ENCODE measurements at regions of chr1 and their contacts with region 1.

Region 1: DNA sequence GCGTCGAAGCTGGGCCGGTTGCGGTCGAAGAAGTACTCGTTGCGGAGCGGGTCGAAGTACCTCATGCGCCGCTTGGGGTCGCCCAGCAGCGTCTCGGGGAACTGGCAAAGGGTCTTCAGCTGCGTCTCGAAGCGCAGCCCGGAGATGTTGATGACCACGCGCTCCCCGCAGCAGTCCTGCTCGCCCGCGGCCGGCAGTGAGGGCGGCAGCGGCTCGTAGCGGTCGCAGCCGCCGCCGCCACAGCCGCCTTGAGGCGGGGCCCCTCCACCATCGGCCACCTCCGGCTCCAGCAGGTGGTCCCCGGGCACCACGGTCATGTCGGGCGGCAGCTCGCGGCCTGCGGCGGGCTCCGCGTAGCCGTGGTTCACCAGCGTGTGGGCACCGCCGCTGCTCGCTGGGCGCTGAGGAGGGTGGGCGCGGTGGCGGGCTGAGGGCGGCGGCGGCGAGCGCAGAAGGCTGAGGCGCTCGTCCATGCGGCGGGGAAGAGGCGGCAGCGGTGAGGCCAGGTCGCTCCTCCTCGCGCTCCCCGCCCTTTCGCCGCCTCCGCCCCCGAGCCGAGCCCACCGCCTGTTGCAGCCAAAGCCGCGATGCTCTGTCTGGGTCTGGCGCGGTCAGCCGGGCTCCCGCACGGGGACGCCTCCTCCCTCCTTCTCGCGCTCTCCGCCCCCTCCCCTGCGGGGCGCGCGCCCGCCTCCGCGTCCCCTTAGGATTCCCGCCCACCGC is at the start of gene KCNA3:
- DNase-seq: peak; percentile 45 to 86 (median 65)
- ATAC-seq: peak; percentile 25
- H3K4me3 ChIP-seq: peak within 1 kb of the TSS; percentile 99
- H3K4me3 Mint-ChIP-seq: peak within 1 kb of the TSS; percentile 90
- H3K27ac ChIP-seq: peak within 1 kb of the TSS; percentile 93 to 95
- H3K27ac Mint-ChIP-seq: peak within 1 kb of the TSS; percentile 73
- H3K4me1 ChIP-seq: peaks cover 16% of the 10 kb centered on the region
- H3K4me1 Mint-ChIP-seq: peaks cover 59% of the 10 kb centered on the region
- H3K27me3 ChIP-seq: no peaks in the 10 kb centered on the region
- H3K27me3 Mint-ChIP-seq: no peaks in the 10 kb centered on the region
- CTCF ChIP-seq: peak; percentile 49
- total RNA-seq, gene KCNA3: 112 to 118 TPM

Region 2: GRCh38 chr1:110645821-110646735 is 28.4 kb before region 1 on chr1:
- CTCF ChIA-PET with region 1: interaction called, 13 read pairs
- POLR2A ChIA-PET with region 1: interaction called, 63 read pairs
- intact Hi-C with region 1: loop called in 1 of 2 experiments (anchors 1 kb)
- DNase-seq: peak in 3 of 14 experiments; percentile 45 to 71 (median 62)
- ATAC-seq: no peak
- H3K4me3 ChIP-seq: no peak overlapping the region
- H3K4me3 Mint-ChIP-seq: peak overlapping the region; percentile 43
- H3K27ac ChIP-seq: no peak overlapping the region
- H3K27ac Mint-ChIP-seq: no peak overlapping the region
- H3K4me1 ChIP-seq: peaks cover 77% of the 10 kb centered on the region
- H3K4me1 Mint-ChIP-seq: peaks cover 46% of the 10 kb centered on the region
- H3K27me3 ChIP-seq: no peaks in the 10 kb centered on the region
- H3K27me3 Mint-ChIP-seq: no peaks in the 10 kb centered on the region
- CTCF ChIP-seq: no peak

Region 3: DNA sequence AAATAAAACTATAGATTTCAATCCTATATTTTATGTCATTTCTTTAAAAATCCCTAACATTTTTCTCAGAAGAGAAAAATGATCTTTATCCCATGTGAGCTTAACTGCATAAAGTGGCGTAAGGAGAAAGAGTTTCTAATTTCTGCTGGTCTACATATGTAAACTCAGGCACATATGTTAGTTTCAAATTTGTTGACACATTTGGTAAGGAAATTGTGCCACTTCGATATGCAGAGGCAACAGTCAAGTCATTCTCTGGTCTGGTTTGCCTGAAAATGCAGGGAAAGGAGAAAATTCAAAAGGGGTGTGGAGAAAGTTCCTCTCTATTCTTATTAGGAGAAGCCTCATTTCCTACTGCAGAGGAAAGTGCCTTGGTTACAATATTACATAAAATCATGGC is 11.3 kb before region 1 on chr1:
- CTCF ChIA-PET with region 1: interaction called, 4 read pairs
- POLR2A ChIA-PET with region 1: interaction called, 10 read pairs
- intact Hi-C with region 1: loop called in 1 of 2 experiments (anchors 2 kb)
- DNase-seq: no peak
- ATAC-seq: no peak
- H3K4me3 ChIP-seq: no peak overlapping the region
- H3K4me3 Mint-ChIP-seq: no peak overlapping the region
- H3K27ac ChIP-seq: no peak overlapping the region
- H3K27ac Mint-ChIP-seq: peak overlapping the region; percentile 60
- H3K4me1 ChIP-seq: peaks cover 24% of the 10 kb centered on the region
- H3K4me1 Mint-ChIP-seq: peaks cover 45% of the 10 kb centered on the region
- H3K27me3 ChIP-seq: no peaks in the 10 kb centered on the region
- H3K27me3 Mint-ChIP-seq: no peaks in the 10 kb centered on the region
- CTCF ChIP-seq: no peak

Region 4: GRCh38 chr1:110766025-110766647 is 91.6 kb after region 1 on chr1:
- CTCF ChIA-PET with region 1: interaction called, 15 read pairs
- POLR2A ChIA-PET with region 1: interaction called, 13 read pairs
- intact Hi-C with region 1: no loop called
- DNase-seq: peak; percentile 22 to 87 (median 44)
- ATAC-seq: peak; percentile 82
- H3K4me3 ChIP-seq: no peak overlapping the region
- H3K4me3 Mint-ChIP-seq: no peak overlapping the region
- H3K27ac ChIP-seq: no peak overlapping the region
- H3K27ac Mint-ChIP-seq: no peak overlapping the region
- H3K4me1 ChIP-seq: peaks cover 4% of the 10 kb centered on the region
- H3K4me1 Mint-ChIP-seq: peaks cover 5% of the 10 kb centered on the region
- H3K27me3 ChIP-seq: no peaks in the 10 kb centered on the region
- H3K27me3 Mint-ChIP-seq: peaks cover 5% of the 10 kb centered on the region
- CTCF ChIP-seq: peak; percentile 93